ENCODE measurements at regions of chr10 and their contacts with region 1.

Region 1: DNA sequence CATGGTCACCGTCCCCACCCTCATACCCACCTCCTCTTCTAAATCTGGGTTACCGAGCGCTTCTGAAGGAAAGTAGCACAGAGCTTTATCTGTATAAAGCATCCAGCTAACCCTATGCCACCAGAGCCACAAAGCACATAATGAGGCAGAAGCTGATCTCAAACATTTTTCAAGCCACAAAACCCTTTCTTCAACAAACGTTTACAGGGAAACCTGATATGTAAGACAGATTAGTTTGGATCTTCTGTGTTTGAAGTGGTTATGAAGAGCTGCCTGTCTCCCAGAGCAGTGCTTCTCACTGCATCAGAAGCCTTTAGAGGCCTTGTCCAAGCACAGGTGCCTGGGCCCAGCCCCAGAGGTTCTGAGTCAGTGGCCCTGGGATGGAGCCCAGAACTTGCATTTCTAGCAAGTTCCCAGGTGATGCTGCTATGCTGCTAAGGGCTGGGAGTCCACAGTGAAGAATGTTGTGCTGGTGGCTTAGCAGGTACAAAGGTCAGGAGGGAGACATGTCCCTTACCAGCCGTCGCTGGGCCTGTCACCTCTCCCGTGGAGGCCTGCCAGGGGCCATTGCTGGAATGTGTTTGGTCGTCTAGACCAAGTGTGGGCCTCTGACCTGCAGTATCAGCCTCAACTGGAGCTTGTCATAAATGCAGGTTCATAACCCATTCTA is 90.4 kb downstream of the TAF3 start:
- DNase-seq: peak; percentile 85 to 93
- H3K4me3 ChIP-seq: no peak overlapping the region
- H3K4me3 Mint-ChIP-seq: no peak overlapping the region
- H3K27ac Mint-ChIP-seq: peak overlapping the region; percentile 30
- H3K4me1 ChIP-seq: peaks cover 23% of the 10 kb centered on the region
- H3K4me1 Mint-ChIP-seq: peaks cover 42% of the 10 kb centered on the region
- H3K27me3 ChIP-seq: no peaks in the 10 kb centered on the region
- H3K27me3 Mint-ChIP-seq: no peaks in the 10 kb centered on the region
- CTCF ChIP-seq: no peak

Region 2: DNA sequence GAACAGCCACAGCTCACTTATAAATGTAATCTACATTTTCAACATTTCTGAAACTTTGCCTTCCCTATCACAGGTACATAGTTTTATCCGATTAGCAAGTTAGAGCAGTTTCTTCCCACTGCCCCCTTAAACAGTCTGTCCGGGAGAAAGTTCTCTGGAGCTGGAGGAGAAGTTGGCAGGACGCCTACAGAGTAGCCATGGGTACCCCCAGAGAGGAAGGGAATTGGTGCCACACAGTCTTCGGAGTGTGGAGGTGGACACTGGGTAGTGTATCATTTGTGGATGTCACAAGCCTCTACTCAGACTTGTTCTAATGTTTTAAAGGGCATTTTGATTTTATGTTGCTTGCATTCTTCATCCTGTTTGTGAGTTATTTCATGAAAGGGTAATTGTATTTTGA is 51.4 kb before region 1 on chr10:
- CTCF ChIA-PET with region 1: no interaction called
- POLR2A ChIA-PET with region 1: no interaction called
- intact Hi-C with region 1: loop called (anchors 2 kb)
- DNase-seq: peak in 1 of 2 experiments; percentile 24
- H3K4me3 ChIP-seq: no peak overlapping the region
- H3K4me3 Mint-ChIP-seq: peak overlapping the region; percentile 60
- H3K27ac Mint-ChIP-seq: peak overlapping the region; percentile 81
- H3K4me1 ChIP-seq: peaks cover 62% of the 10 kb centered on the region
- H3K4me1 Mint-ChIP-seq: peaks cover 49% of the 10 kb centered on the region
- H3K27me3 ChIP-seq: no peaks in the 10 kb centered on the region
- H3K27me3 Mint-ChIP-seq: no peaks in the 10 kb centered on the region
- CTCF ChIP-seq: no peak

Region 3: DNA sequence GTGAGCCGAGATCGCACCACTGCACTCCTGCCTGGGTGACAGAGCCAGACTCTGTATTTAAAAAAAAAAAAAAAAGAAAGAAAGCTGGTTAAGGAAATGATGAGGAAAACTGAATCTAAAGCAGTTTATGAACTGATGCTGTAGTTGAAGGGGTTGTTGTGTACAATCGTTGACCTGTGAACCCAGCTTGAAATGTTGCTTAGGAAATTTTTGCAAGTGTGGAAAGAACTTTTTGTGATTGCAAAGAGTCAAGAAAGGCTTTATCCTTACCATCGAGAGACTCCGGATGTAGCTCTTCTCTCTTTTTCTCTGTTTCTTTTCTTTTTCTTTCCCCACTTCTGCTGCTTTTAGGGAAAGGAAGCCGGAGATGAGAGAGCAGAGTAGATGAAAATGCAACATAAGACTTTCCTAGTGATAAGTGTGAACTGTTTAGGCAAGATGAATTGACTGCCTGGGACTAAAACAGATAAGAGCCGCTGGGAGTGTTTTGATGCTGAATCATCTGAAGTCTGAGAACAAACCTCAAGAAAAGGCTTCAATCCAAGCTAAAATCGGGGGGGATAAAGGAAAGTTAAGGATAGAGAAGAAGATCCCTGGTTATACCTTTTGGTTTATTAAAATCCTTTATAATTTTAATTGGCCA is 21.4 kb before region 1 on chr10:
- CTCF ChIA-PET with region 1: no interaction called
- POLR2A ChIA-PET with region 1: no interaction called
- intact Hi-C with region 1: loop called (anchors 2 kb)
- DNase-seq: no peak
- H3K4me3 ChIP-seq: no peak overlapping the region
- H3K4me3 Mint-ChIP-seq: no peak overlapping the region
- H3K27ac Mint-ChIP-seq: peak overlapping the region; percentile 58
- H3K4me1 ChIP-seq: peaks cover 22% of the 10 kb centered on the region
- H3K4me1 Mint-ChIP-seq: peaks cover 36% of the 10 kb centered on the region
- H3K27me3 ChIP-seq: no peaks in the 10 kb centered on the region
- H3K27me3 Mint-ChIP-seq: no peaks in the 10 kb centered on the region
- CTCF ChIP-seq: no peak

Region 4: DNA sequence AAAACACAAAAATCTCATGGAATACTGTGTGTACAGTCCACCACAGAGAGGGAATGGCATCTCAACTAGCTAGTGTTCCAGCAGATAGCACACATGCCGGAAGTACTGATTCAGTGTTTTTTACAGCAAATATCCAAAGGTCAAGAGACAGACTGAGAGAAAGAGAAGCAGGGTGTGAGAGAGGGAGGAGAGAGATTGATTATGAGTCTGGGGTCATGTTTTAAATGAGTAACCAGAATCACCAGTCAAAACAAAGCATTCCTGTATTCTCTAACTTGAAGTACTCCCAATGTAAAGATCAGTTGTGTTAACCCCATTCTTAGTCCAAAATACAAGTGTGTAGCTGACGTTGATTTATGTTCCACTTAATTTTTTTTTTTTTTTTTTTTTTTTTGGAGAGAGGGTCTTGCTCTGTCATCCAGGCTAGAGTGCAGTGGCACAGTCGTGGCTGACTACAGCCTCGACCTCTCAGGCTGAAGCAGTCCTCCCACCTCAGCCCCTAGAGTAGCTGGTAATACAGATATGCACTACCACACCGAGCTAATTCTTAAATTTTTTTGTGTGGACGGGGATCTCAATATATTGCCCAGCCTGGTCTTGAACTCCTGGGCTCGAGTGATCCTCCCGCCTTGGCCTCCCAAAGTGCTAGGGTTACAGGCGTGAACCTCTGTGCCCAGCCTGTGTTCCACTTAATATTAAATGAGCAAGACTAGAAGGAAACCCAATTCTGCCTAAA is 23.8 kb after region 1 on chr10:
- CTCF ChIA-PET with region 1: no interaction called
- POLR2A ChIA-PET with region 1: no interaction called
- intact Hi-C with region 1: loop called (anchors 2 kb)
- DNase-seq: peak; percentile 61 to 66
- H3K4me3 ChIP-seq: peak overlapping the region; percentile 10; the same call in 1 of the 2 replicates
- H3K4me3 Mint-ChIP-seq: peak overlapping the region; percentile 49
- H3K27ac Mint-ChIP-seq: peak overlapping the region; percentile 48
- H3K4me1 ChIP-seq: peaks cover 31% of the 10 kb centered on the region
- H3K4me1 Mint-ChIP-seq: peaks cover 45% of the 10 kb centered on the region
- H3K27me3 ChIP-seq: no peaks in the 10 kb centered on the region
- H3K27me3 Mint-ChIP-seq: no peaks in the 10 kb centered on the region
- CTCF ChIP-seq: no peak

Region 5: GRCh38 chr10:7952266-7952665 is 43.6 kb after region 1 on chr10:
- CTCF ChIA-PET with region 1: no interaction called
- POLR2A ChIA-PET with region 1: no interaction called
- intact Hi-C with region 1: loop called (anchors 2 kb)
- DNase-seq: no peak
- H3K4me3 ChIP-seq: no peak overlapping the region
- H3K4me3 Mint-ChIP-seq: no peak overlapping the region
- H3K27ac Mint-ChIP-seq: no peak overlapping the region
- H3K4me1 ChIP-seq: peaks cover 21% of the 10 kb centered on the region
- H3K4me1 Mint-ChIP-seq: peaks cover 30% of the 10 kb centered on the region
- H3K27me3 ChIP-seq: no peaks in the 10 kb centered on the region
- H3K27me3 Mint-ChIP-seq: no peaks in the 10 kb centered on the region
- CTCF ChIP-seq: no peak

Region 6: DNA sequence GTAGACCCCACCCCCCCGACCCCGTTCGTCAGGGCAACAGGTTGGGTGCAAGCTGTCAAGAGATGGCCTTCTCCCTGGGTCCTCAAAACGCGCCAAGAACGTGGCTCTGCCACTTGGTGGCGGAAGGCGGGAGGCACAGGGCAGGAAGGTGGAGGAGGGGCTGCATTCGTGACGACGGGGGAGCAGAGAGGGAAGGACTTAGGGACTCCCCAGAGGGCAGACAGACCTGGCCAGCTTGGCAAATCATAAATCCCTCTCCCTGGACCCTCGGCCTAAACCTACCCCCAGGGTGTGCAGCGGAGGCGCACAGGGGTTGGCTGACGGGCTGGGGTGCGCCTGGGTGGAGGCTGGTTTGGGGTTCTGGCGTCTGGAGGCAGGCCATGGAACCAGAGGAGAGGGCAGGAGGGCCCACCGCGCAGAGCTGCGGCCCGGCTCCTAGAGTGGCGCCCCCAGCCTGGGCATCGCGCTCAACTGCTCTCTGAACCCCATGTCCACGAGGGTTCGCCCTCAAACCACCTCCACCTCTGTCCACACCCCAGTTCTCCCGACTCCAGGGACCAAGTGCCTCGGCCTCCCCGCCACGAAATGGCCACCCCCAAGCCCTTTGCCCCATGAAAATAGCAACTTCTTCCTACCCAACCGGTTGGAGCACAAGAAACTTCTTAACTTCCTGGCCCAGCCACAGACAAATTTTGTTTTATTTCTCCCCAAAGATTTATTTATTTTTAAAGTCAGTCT is 135.1 kb after region 1 on chr10:
- CTCF ChIA-PET with region 1: no interaction called
- POLR2A ChIA-PET with region 1: no interaction called
- intact Hi-C with region 1: no loop called
- DNase-seq: no peak
- H3K4me3 ChIP-seq: no peak overlapping the region
- H3K4me3 Mint-ChIP-seq: no peak overlapping the region
- H3K27ac Mint-ChIP-seq: no peak overlapping the region
- H3K4me1 ChIP-seq: peaks cover 28% of the 10 kb centered on the region
- H3K4me1 Mint-ChIP-seq: peaks cover 30% of the 10 kb centered on the region
- H3K27me3 ChIP-seq: no peaks in the 10 kb centered on the region
- H3K27me3 Mint-ChIP-seq: no peaks in the 10 kb centered on the region
- CTCF ChIP-seq: no peak

Measured in Caco-2 (cell line).